ENCODE measurements at regions of chr20 and their contacts with region 1.

Region 1: GRCh38 chr20:49610701-49611538 is 43.0 kb upstream of the PTGIS start:
- DNase-seq: peak; percentile 95
- H3K4me3 Mint-ChIP-seq: peak overlapping the region; percentile 71
- H3K27ac Mint-ChIP-seq: peak overlapping the region; percentile 79
- H3K4me1 Mint-ChIP-seq: peaks cover 22% of the 10 kb centered on the region
- H3K27me3 Mint-ChIP-seq: no peaks in the 10 kb centered on the region

Region 2: GRCh38 chr20:49171909-49172308 is 439.0 kb before region 1 on chr20:
- intact Hi-C with region 1: no loop called
- DNase-seq: no peak
- H3K4me3 Mint-ChIP-seq: no peak overlapping the region
- H3K27ac Mint-ChIP-seq: no peak overlapping the region
- H3K4me1 Mint-ChIP-seq: peaks cover 43% of the 10 kb centered on the region
- H3K27me3 Mint-ChIP-seq: no peaks in the 10 kb centered on the region

Region 3: GRCh38 chr20:49338061-49338460 is 272.9 kb before region 1 on chr20:
- intact Hi-C with region 1: loop called (anchors 1 kb)
- DNase-seq: no peak
- H3K4me3 Mint-ChIP-seq: no peak overlapping the region
- H3K27ac Mint-ChIP-seq: no peak overlapping the region
- H3K4me1 Mint-ChIP-seq: peaks cover 3% of the 10 kb centered on the region
- H3K27me3 Mint-ChIP-seq: peaks cover 11% of the 10 kb centered on the region

Region 4: GRCh38 chr20:49529470-49529869 is 81.5 kb before region 1 on chr20:
- intact Hi-C with region 1: no loop called
- DNase-seq: no peak
- H3K4me3 Mint-ChIP-seq: no peak overlapping the region
- H3K27ac Mint-ChIP-seq: no peak overlapping the region
- H3K4me1 Mint-ChIP-seq: peaks cover 6% of the 10 kb centered on the region
- H3K27me3 Mint-ChIP-seq: peaks cover 11% of the 10 kb centered on the region

Region 5: GRCh38 chr20:49541733-49542513 is 69.0 kb before region 1 on chr20:
- intact Hi-C with region 1: loop called (anchors 1 kb)
- DNase-seq: peak; percentile 90
- H3K4me3 Mint-ChIP-seq: peak overlapping the region; percentile 33
- H3K27ac Mint-ChIP-seq: peak overlapping the region; percentile 95
- H3K4me1 Mint-ChIP-seq: peaks cover 31% of the 10 kb centered on the region
- H3K27me3 Mint-ChIP-seq: peaks cover 2% of the 10 kb centered on the region

Region 6: GRCh38 chr20:49594143-49594930 is 16.6 kb before region 1 on chr20:
- intact Hi-C with region 1: loop called (anchors 1 kb)
- DNase-seq: peak; percentile 93
- H3K4me3 Mint-ChIP-seq: peak overlapping the region; percentile 90
- H3K27ac Mint-ChIP-seq: peak overlapping the region; percentile 100
- H3K4me1 Mint-ChIP-seq: peaks cover 79% of the 10 kb centered on the region
- H3K27me3 Mint-ChIP-seq: no peaks in the 10 kb centered on the region

Region 7: GRCh38 chr20:49846206-49846807 is 235.4 kb after region 1 on chr20:
- intact Hi-C with region 1: loop called (anchors 1 kb)
- DNase-seq: peak; percentile 88
- H3K4me3 Mint-ChIP-seq: no peak overlapping the region
- H3K27ac Mint-ChIP-seq: no peak overlapping the region
- H3K4me1 Mint-ChIP-seq: peaks cover 18% of the 10 kb centered on the region
- H3K27me3 Mint-ChIP-seq: no peaks in the 10 kb centered on the region

Region 8: DNA sequence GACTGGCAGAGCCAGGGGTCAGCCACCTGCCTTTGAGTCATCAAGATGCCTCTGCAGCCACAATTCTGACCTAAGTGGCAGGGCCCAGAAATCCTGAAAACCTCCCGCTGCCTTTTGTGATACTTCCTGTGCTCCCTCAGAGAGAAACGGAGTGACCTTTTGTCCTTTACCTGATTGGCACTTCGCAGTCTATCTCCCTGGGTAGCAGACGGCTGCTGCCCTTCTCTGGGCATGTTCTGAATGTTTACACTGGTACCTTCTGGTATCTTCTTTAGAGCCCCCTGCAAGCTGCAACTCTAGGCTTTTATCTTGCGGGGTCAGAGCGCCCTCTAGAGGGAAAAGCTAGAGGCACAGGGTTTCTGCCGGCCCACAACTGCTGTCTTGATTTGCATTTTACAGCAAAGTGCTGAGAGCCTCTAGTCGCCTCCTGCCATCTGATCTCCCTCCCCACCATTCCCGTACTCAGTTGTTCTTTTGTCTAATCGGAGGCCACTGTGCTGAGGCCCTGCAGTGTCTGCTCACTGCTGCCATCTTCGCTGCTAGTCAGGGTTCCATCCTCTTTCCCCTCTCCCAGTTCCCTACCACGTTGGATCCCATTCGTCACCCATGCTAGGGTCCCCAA is 277.5 kb after region 1 on chr20:
- intact Hi-C with region 1: loop called (anchors 2 kb)
- DNase-seq: peak; percentile 86
- H3K4me3 Mint-ChIP-seq: no peak overlapping the region
- H3K27ac Mint-ChIP-seq: no peak overlapping the region
- H3K4me1 Mint-ChIP-seq: peaks cover 16% of the 10 kb centered on the region
- H3K27me3 Mint-ChIP-seq: no peaks in the 10 kb centered on the region

Region 9: GRCh38 chr20:49928401-49929141 is 317.7 kb after region 1 on chr20:
- intact Hi-C with region 1: loop called (anchors 1 kb)
- DNase-seq: peak; percentile 93
- H3K4me3 Mint-ChIP-seq: no peak overlapping the region
- H3K27ac Mint-ChIP-seq: peak overlapping the region; percentile 28
- H3K4me1 Mint-ChIP-seq: peaks cover 3% of the 10 kb centered on the region
- H3K27me3 Mint-ChIP-seq: peaks cover 2% of the 10 kb centered on the region